ENCODE measurements at regions of chr14 and their contacts with region 1.

Region 1: GRCh38 chr14:73728717-73729330 is 14.6 kb upstream of the PNMA1 start:
- DNase-seq: peak; percentile 66 to 87
- H3K4me3 ChIP-seq: no peak overlapping the region
- H3K27ac ChIP-seq: 0 out of 2 replicates have a peak overlapping the region, but pooled peaks have one; percentile 30
- H3K4me1 ChIP-seq: peaks cover 56% of the 10 kb centered on the region
- H3K27me3 ChIP-seq: no peaks in the 10 kb centered on the region
- CTCF ChIP-seq: peak; percentile 94

Region 2: GRCh38 chr14:73472185-73473114 is 256.4 kb before region 1 on chr14:
- CTCF ChIA-PET with region 1: no interaction called
- POLR2A ChIA-PET with region 1: interaction called, 18 read pairs
- intact Hi-C with region 1: no loop called
- DNase-seq: peak in 1 of 2 experiments; percentile 51
- H3K4me3 ChIP-seq: no peak overlapping the region
- H3K27ac ChIP-seq: no peak overlapping the region
- H3K4me1 ChIP-seq: no peaks in the 10 kb centered on the region
- H3K27me3 ChIP-seq: no peaks in the 10 kb centered on the region
- CTCF ChIP-seq: peak; percentile 77

Region 3: GRCh38 chr14:73753959-73754882 is 25.4 kb after region 1 on chr14:
- CTCF ChIA-PET with region 1: interaction called, 12 read pairs
- POLR2A ChIA-PET with region 1: interaction called, 16 read pairs
- intact Hi-C with region 1: loop called (anchors 2 kb)
- DNase-seq: no peak
- H3K4me3 ChIP-seq: no peak overlapping the region
- H3K27ac ChIP-seq: peak overlapping the region; percentile 90
- H3K4me1 ChIP-seq: peaks cover 79% of the 10 kb centered on the region
- H3K27me3 ChIP-seq: no peaks in the 10 kb centered on the region
- CTCF ChIP-seq: no peak

Region 4: GRCh38 chr14:73785873-73786695 is 57.3 kb after region 1 on chr14:
- CTCF ChIA-PET with region 1: interaction called, 6 read pairs
- POLR2A ChIA-PET with region 1: no interaction called
- intact Hi-C with region 1: loop called (anchors 2 kb)
- DNase-seq: peak; percentile 61 to 85
- H3K4me3 ChIP-seq: peak overlapping the region; percentile 71
- H3K27ac ChIP-seq: peak overlapping the region; percentile 77
- H3K4me1 ChIP-seq: peaks cover 38% of the 10 kb centered on the region
- H3K27me3 ChIP-seq: no peaks in the 10 kb centered on the region
- CTCF ChIP-seq: peak; percentile 43; the same call in 1 of the 2 replicates

Region 5: DNA sequence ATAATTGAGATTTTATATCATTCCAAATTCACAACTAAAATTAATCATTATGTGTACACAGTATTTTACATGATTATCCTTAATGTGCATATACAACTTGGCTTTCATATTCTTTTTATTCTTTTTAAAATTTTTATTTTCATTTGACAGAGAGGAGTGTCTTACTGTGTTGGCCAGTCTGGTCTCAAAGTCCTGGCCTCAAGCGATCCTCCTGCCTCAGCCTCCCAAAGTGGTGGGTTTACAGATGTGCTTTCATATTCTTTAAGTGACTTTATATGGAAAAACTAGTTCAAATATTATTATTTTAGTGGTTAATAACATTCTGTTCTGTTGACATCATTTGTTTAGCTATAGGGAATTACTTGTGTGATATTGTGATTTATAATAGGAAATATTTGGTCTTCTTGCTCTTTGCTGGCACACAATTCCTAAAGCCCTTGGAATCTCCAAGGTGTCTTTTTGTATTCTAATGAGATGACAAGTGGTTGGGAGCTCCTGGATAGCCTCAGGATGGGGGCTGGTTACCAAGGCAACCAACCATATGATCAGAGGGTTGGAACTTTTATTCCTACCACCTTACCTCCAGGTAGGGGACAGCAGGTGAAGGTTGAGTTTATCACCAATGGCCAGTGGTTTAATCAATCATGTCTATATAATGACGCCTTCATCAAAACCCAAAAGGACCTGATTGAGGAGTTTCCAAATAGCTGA is 141.9 kb after region 1 on chr14:
- CTCF ChIA-PET with region 1: interaction called, 4 read pairs
- POLR2A ChIA-PET with region 1: interaction called, 3 read pairs
- intact Hi-C with region 1: loop called (anchors 1 kb)
- DNase-seq: no peak
- H3K4me3 ChIP-seq: no peak overlapping the region
- H3K27ac ChIP-seq: no peak overlapping the region
- H3K4me1 ChIP-seq: no peaks in the 10 kb centered on the region
- H3K27me3 ChIP-seq: no peaks in the 10 kb centered on the region
- CTCF ChIP-seq: no peak

Region 6: DNA sequence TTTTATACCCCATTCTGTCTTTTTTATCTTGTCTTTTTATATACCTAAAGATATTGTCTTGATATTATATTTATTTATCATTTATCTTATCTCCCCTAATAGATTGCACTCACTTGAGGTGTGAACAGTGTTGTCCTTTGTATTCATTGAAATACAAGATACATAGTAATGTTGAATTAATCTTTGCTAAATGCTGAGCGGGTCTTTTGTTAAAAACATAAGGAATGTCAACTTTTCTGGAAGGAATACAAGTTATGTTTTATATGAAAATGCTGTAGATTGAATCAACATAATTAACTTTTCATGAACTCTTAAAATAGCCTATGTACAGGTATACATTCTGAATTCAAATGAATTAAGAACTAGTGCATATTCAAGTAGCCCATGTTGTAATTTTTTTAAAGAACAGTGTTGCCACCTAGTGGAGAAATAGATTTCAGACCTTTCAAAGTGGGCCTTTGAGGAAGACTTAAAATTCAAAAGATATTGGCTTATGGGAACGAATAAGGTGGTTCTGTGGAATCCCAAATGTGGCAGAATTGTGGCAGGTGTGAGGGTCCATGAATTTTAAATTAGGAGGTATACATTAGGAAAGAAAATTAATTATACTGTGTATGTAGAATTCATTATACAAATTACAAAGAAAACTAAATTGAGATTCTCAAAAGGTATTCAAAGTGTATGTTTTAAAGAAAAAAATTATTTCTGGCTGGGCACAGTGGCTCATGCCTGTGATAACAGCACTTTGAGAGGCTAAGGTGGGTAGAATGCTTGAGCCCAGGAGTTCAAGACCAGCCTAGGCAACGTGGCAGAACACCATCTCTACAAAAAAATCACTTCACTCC is 309.4 kb after region 1 on chr14:
- CTCF ChIA-PET with region 1: no interaction called
- POLR2A ChIA-PET with region 1: no interaction called
- intact Hi-C with region 1: loop called (anchors 10 kb)
- DNase-seq: peak in 1 of 2 experiments; percentile 66
- H3K4me3 ChIP-seq: no peak overlapping the region
- H3K27ac ChIP-seq: no peak overlapping the region
- H3K4me1 ChIP-seq: no peaks in the 10 kb centered on the region
- H3K27me3 ChIP-seq: no peaks in the 10 kb centered on the region
- CTCF ChIP-seq: peak; percentile 96

Measured in PC-9 (cell line).